Naive thymus-derived CD4-positive, alpha-beta T cell (primary cell): ENCODE measurements at regions of chr17 and their contacts with region 1.

Region 1: GRCh38 chr17:36629252-36629847 is 28.0 kb downstream of the MRM1 start:
- DNase-seq: peak; percentile 48 to 84 (median 68)
- ATAC-seq: peak; percentile 93
- H3K4me3 ChIP-seq: no peak overlapping the region
- H3K4me3 Mint-ChIP-seq: no peak overlapping the region
- H3K27ac ChIP-seq: no peak overlapping the region
- H3K27ac Mint-ChIP-seq: peak overlapping the region in 1 of 9 donors; percentile 4
- H3K4me1 ChIP-seq: no peaks in the 10 kb centered on the region
- H3K4me1 Mint-ChIP-seq: peaks cover 0 to 3% (median 0%) of the 10 kb centered on the region in 7 donors
- H3K27me3 ChIP-seq: no peaks in the 10 kb centered on the region
- H3K27me3 Mint-ChIP-seq: peaks cover 0 to 16% (median 0%) of the 10 kb centered on the region in 5 donors

Region 2: DNA sequence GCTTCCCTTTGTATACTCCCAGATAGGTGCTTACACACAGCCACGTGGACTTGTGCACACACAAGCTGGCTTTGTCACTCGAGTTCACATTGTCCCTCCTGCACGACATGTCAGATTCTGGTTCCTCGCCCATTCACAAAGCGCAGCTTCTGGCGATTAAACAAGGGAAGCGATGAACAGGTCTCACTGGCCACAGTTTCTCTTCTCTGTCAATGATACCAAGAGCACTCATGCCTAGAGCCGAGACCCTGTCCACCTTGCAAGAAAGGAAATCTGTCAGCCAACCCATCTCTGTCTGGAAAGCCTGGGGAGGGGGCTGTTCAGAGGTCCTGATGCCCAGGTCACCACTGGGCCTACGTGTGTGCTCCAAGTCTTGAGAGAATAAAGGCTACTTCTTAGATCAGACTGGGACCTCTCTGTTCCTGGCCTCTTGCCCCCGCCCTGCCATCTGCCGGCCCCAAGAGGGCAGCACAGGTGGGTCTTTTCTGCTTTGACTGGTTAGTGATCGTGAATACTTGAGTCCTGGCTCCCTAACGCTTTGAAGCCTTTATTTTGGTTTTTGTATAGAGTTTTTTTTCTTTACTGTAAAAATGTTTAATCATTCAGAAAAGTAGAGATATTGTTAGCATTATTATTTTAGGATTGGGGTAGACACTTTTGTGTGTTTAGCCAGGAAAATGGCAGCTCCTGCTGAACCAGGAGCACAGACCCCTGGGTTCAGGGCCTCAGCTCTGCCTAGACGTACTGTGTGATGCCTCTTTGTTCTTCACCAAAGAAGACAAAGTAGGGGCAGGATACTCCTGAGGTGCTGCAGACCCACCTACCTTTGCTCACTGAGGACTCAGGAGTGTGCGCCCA is 76.8 kb after region 1 on chr17:
- CTCF ChIA-PET with region 1: interaction called, 4 read pairs
- POLR2A ChIA-PET with region 1: no interaction called
- intact Hi-C with region 1: loop called (anchors 1 to 2 kb)
- DNase-seq: peak in 6 of 9 donors; percentile 26 to 47 (median 40)
- ATAC-seq: peak; percentile 74
- H3K4me3 ChIP-seq: no peak overlapping the region
- H3K4me3 Mint-ChIP-seq: no peak overlapping the region
- H3K27ac ChIP-seq: no peak overlapping the region
- H3K27ac Mint-ChIP-seq: no peak overlapping the region
- H3K4me1 ChIP-seq: no peaks in the 10 kb centered on the region
- H3K4me1 Mint-ChIP-seq: peaks cover 0 to 5% (median 0%) of the 10 kb centered on the region in 7 donors
- H3K27me3 ChIP-seq: peaks cover 0 to 5% of the 10 kb centered on the region in 2 donors
- H3K27me3 Mint-ChIP-seq: peaks cover 29 to 43% (median 39%) of the 10 kb centered on the region in 5 donors

Region 3: GRCh38 chr17:36755586-36755985 is 126.2 kb after region 1 on chr17:
- CTCF ChIA-PET with region 1: interaction called, 3 read pairs
- POLR2A ChIA-PET with region 1: no interaction called
- intact Hi-C with region 1: loop called (anchors 1 kb)
- DNase-seq: peak in 6 of 9 donors; percentile 14 to 40 (median 24)
- ATAC-seq: no peak
- H3K4me3 ChIP-seq: no peak overlapping the region
- H3K4me3 Mint-ChIP-seq: no peak overlapping the region
- H3K27ac ChIP-seq: no peak overlapping the region
- H3K27ac Mint-ChIP-seq: peak overlapping the region in 1 of 9 donors; percentile 30
- H3K4me1 ChIP-seq: no peaks in the 10 kb centered on the region
- H3K4me1 Mint-ChIP-seq: peaks cover 0 to 4% (median 0%) of the 10 kb centered on the region in 7 donors
- H3K27me3 ChIP-seq: no peaks in the 10 kb centered on the region
- H3K27me3 Mint-ChIP-seq: peaks cover 0 to 5% (median 0%) of the 10 kb centered on the region in 5 donors

Region 4: DNA sequence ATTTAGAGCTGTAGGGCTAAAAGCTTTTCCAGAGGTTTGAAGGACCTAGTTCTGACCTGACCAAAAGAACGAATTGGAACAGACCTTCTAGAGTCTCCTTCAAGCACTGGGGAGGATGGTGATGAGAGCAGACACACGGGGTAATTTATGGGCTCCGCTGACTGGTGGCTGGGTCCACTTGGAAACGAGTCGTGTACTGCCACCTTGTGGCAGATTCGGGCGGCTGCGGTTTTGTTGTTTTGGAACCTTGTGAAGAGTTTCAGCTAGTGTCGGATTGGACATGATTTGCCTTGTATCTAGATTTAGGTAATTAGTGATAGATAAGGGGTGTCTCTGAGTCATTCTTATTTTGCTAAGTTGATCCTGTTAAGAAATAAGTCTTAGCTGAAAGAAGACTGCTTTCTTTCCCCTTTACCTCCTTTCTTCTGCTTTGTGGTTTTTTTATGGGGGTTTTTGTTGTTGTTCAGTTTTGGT is 418.3 kb after region 1 on chr17:
- CTCF ChIA-PET with region 1: interaction called, 42 read pairs
- POLR2A ChIA-PET with region 1: no interaction called
- intact Hi-C with region 1: loop called in 1 of 2 experiments (anchors 1 kb)
- DNase-seq: peak; percentile 42 to 74 (median 69)
- ATAC-seq: peak; percentile 91
- H3K4me3 ChIP-seq: no peak overlapping the region
- H3K4me3 Mint-ChIP-seq: no peak overlapping the region
- H3K27ac ChIP-seq: no peak overlapping the region
- H3K27ac Mint-ChIP-seq: peak overlapping the region in 3 of 9 donors; percentile 28 to 75 (median 32)
- H3K4me1 ChIP-seq: no peaks in the 10 kb centered on the region
- H3K4me1 Mint-ChIP-seq: peaks cover 11 to 15% (median 12%) of the 10 kb centered on the region in 7 donors
- H3K27me3 ChIP-seq: no peaks in the 10 kb centered on the region
- H3K27me3 Mint-ChIP-seq: no peaks in the 10 kb centered on the region

Region 5: GRCh38 chr17:37220607-37220953 is 591.2 kb after region 1 on chr17:
- CTCF ChIA-PET with region 1: interaction called, 4 read pairs
- POLR2A ChIA-PET with region 1: no interaction called
- intact Hi-C with region 1: loop called in 1 of 2 experiments (anchors 1 kb)
- DNase-seq: peak in 3 of 9 donors; percentile 0 to 6 (median 4)
- ATAC-seq: no peak
- H3K4me3 ChIP-seq: no peak overlapping the region
- H3K4me3 Mint-ChIP-seq: no peak overlapping the region
- H3K27ac ChIP-seq: no peak overlapping the region
- H3K27ac Mint-ChIP-seq: no peak overlapping the region
- H3K4me1 ChIP-seq: no peaks in the 10 kb centered on the region
- H3K4me1 Mint-ChIP-seq: peaks cover 0 to 11% (median 0%) of the 10 kb centered on the region in 7 donors
- H3K27me3 ChIP-seq: no peaks in the 10 kb centered on the region
- H3K27me3 Mint-ChIP-seq: no peaks in the 10 kb centered on the region

Region 6: GRCh38 chr17:37239690-37240334 is 610.5 kb after region 1 on chr17:
- CTCF ChIA-PET with region 1: interaction called, 9 read pairs
- POLR2A ChIA-PET with region 1: no interaction called
- intact Hi-C with region 1: loop called (anchors 1 kb)
- DNase-seq: peak in 4 of 9 donors; percentile 2 to 11 (median 6)
- ATAC-seq: no peak
- H3K4me3 ChIP-seq: no peak overlapping the region
- H3K4me3 Mint-ChIP-seq: no peak overlapping the region
- H3K27ac ChIP-seq: no peak overlapping the region
- H3K27ac Mint-ChIP-seq: peak overlapping the region in 1 of 9 donors; percentile 69
- H3K4me1 ChIP-seq: no peaks in the 10 kb centered on the region
- H3K4me1 Mint-ChIP-seq: peaks cover 0 to 4% (median 0%) of the 10 kb centered on the region in 7 donors
- H3K27me3 ChIP-seq: no peaks in the 10 kb centered on the region
- H3K27me3 Mint-ChIP-seq: no peaks in the 10 kb centered on the region

Region 7: DNA sequence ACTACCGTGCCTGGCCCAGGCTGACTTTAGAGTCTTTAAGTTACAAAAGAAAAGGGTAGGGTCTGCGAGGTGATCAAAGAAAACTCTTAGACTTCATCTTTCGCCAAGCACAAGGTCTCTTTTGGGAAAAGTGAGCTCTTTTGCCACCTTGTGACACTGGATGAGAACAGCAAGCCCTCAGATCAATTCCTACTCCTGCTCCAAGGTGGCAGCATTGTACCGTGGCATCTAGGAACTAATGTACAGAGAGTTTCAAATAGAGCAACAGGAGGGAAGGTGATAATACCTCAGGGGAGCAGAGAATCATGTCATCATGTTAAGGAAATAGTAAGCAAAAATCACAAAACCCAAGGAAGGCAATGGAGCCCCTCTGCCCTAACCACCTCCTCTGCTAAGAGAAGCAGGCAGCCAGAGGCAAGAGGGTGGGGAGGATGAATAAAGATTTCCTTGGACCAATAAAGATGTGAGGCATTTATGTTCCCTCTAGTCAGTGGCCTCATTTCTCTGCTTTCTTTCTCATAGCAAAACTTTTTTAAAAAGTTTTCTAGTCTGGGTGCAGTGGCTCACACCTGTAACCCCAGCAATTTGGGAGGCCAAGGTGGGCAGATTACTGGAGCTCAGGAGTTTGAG is 744.3 kb after region 1 on chr17:
- CTCF ChIA-PET with region 1: no interaction called
- POLR2A ChIA-PET with region 1: no interaction called
- intact Hi-C with region 1: loop called in 1 of 2 experiments (anchors 1 kb)
- DNase-seq: peak in 8 of 9 donors; percentile 41 to 71 (median 63)
- ATAC-seq: peak; percentile 99
- H3K4me3 ChIP-seq: no peak overlapping the region
- H3K4me3 Mint-ChIP-seq: no peak overlapping the region
- H3K27ac ChIP-seq: no peak overlapping the region
- H3K27ac Mint-ChIP-seq: peak overlapping the region in 2 of 9 donors; percentile 2 to 69
- H3K4me1 ChIP-seq: no peaks in the 10 kb centered on the region
- H3K4me1 Mint-ChIP-seq: peaks cover 0 to 8% (median 5%) of the 10 kb centered on the region in 7 donors
- H3K27me3 ChIP-seq: no peaks in the 10 kb centered on the region
- H3K27me3 Mint-ChIP-seq: no peaks in the 10 kb centered on the region